B cell (primary cell): ENCODE measurements at regions of chr11 and their contacts with region 1.

Region 1: GRCh38 chr11:13276832-13277767 is 490 bp upstream of the BMAL1 start:
- DNase-seq: peak; percentile 97
- ATAC-seq: peak; percentile 85
- H3K4me3 ChIP-seq: peak overlapping the region; percentile 70 to 94 (median 89)
- H3K4me3 Mint-ChIP-seq: peak overlapping the region; percentile 97
- H3K27ac ChIP-seq: peak overlapping the region; percentile 40 to 46
- H3K27ac Mint-ChIP-seq: peak overlapping the region; percentile 90
- H3K4me1 ChIP-seq: peaks cover 21 to 23% of the 10 kb centered on the region in 2 donors
- H3K4me1 Mint-ChIP-seq: peaks cover 42% of the 10 kb centered on the region
- H3K27me3 ChIP-seq: peaks cover 0 to 20% (median 6%) of the 10 kb centered on the region in 4 experiments
- H3K27me3 Mint-ChIP-seq: peaks cover 17% of the 10 kb centered on the region
- CTCF ChIP-seq: no peak

Region 2: DNA sequence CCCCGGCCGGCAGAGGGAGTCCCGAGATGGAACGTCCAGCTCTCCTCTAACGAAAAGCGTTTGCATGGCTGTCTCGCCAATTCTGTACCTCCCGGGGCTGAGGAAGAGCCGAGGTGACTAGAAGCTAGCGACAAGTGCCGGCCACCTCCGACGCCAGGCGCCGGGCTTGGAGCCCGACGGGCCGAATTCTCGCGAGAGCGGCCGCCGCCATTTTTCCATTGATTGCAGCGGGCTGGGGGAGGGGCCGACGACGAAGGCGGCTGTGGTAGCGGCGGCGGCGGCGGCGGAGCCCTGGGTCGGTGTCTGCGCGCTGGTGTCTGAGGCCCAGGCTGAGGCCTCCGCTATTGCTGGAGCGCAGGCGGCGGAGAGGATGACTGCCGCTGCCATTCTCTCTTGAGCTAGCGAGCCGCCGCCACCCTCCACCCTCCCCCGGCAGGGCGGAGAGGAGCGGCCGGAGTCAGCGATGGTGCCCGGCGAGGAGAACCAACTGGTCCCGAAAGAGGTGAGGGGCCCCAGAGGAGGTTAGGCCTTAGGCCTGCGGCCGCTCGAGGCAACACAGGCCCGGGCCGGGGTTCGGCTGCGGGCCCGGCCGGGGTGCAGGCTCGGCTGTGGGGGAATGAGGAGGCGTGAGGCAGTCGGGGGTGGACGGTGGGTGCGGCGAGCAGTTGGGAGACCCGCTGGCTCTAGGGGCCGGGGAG is 1435.2 kb before region 1 on chr11 and contains the start of gene USP47:
- CTCF ChIA-PET with region 1: no interaction called
- POLR2A ChIA-PET with region 1: no interaction called
- intact Hi-C with region 1: loop called (anchors 5 kb)
- DNase-seq: peak; percentile 96
- ATAC-seq: peak; percentile 81
- H3K4me3 ChIP-seq: peak within 1 kb of the TSS; percentile 85 to 95 (median 92)
- H3K4me3 Mint-ChIP-seq: no peak within 1 kb of the TSS
- H3K27ac ChIP-seq: peak within 1 kb of the TSS; percentile 87 to 98
- H3K27ac Mint-ChIP-seq: no peak within 1 kb of the TSS
- H3K4me1 ChIP-seq: peaks cover 31 to 43% of the 10 kb centered on the region in 2 donors
- H3K4me1 Mint-ChIP-seq: peaks cover 28% of the 10 kb centered on the region
- H3K27me3 ChIP-seq: peaks cover 0 to 6% (median 2%) of the 10 kb centered on the region in 4 experiments
- H3K27me3 Mint-ChIP-seq: peaks cover 9% of the 10 kb centered on the region
- CTCF ChIP-seq: peak; percentile 40
- total RNA-seq, gene USP47: 52.9 and 61.1 TPM in 2 replicates

Region 3: GRCh38 chr11:13462901-13463778 is 186.0 kb after region 1 on chr11 and contains the start of gene BTBD10:
- CTCF ChIA-PET with region 1: interaction called, 4 read pairs
- POLR2A ChIA-PET with region 1: no interaction called
- intact Hi-C with region 1: loop called (anchors 1 kb)
- DNase-seq: peak; percentile 97
- ATAC-seq: peak; percentile 98
- H3K4me3 ChIP-seq: peak within 1 kb of the TSS; percentile 87 to 94 (median 88)
- H3K4me3 Mint-ChIP-seq: peak within 1 kb of the TSS; percentile 99
- H3K27ac ChIP-seq: peak within 1 kb of the TSS; percentile 83 to 93
- H3K27ac Mint-ChIP-seq: peak within 1 kb of the TSS; percentile 97
- H3K4me1 ChIP-seq: peaks cover 17 to 18% of the 10 kb centered on the region in 2 donors
- H3K4me1 Mint-ChIP-seq: peaks cover 46% of the 10 kb centered on the region
- H3K27me3 ChIP-seq: no peaks in the 10 kb centered on the region
- H3K27me3 Mint-ChIP-seq: no peaks in the 10 kb centered on the region
- CTCF ChIP-seq: no peak
- total RNA-seq, gene BTBD10: 19.6 and 22.8 TPM in 2 replicates

Region 4: GRCh38 chr11:13668102-13668956 is 391.2 kb after region 1 on chr11 and contains the start of gene FAR1:
- CTCF ChIA-PET with region 1: no interaction called
- POLR2A ChIA-PET with region 1: no interaction called
- intact Hi-C with region 1: loop called (anchors 1 kb)
- DNase-seq: peak; percentile 98
- ATAC-seq: peak; percentile 87
- H3K4me3 ChIP-seq: peak within 1 kb of the TSS; percentile 69 to 92 (median 80)
- H3K4me3 Mint-ChIP-seq: peak within 1 kb of the TSS; percentile 96
- H3K27ac ChIP-seq: peak within 1 kb of the TSS; percentile 50 to 74
- H3K27ac Mint-ChIP-seq: peak within 1 kb of the TSS; percentile 94
- H3K4me1 ChIP-seq: peaks cover 16 to 24% of the 10 kb centered on the region in 2 donors
- H3K4me1 Mint-ChIP-seq: peaks cover 43% of the 10 kb centered on the region
- H3K27me3 ChIP-seq: peaks cover 0 to 4% (median 1%) of the 10 kb centered on the region in 4 experiments
- H3K27me3 Mint-ChIP-seq: peaks cover 8% of the 10 kb centered on the region
- CTCF ChIP-seq: peak; percentile 78
- total RNA-seq, gene FAR1: 44.7 and 44.8 TPM in 2 replicates

Region 5: DNA sequence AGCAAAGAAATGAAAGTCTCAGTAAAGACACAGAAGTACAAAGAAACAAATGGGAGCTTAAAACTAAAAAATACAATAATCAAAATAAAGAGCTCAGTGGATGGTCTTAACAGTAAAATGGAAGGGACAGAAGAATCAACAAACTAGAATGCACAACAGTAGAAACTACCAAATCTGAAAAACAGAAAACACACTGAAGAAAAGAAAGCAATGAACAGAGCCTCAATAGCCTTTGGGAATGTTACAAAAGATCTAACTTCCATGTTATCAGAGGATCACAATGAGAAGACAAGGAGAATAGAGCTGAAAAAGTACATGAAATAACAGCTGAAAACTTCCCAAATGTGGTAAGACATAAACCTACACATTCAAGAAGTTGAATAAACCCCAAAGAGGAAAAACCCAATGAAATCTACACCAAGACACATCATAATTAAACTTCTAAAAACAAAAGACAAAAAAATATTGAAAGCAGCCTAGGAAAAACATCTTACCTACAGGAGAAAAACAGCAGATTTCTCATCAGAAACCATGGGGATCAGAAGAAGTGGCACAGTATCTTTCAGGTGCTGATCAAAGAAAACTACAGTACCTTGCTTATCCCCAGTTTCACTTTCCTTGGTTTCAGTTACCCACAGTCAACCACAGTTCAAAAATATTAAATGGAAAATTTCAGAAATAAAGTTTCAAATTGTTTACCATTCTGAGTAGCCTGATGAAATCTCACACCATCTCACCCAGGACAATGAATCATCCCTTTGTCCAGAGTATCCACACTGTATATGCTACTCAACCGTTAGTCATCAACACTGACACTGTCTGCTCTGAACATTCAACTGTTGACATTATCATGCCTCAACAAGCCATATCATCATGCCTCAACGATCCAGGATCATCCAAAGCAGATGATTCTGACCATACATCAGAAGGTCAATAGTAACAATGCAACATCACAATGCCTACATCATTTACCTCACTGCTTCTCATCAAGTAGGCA is 1059.7 kb after region 1 on chr11:
- CTCF ChIA-PET with region 1: no interaction called
- POLR2A ChIA-PET with region 1: no interaction called
- intact Hi-C with region 1: loop called (anchors 10 kb)
- DNase-seq: no peak
- ATAC-seq: peak; percentile 57
- H3K4me3 ChIP-seq: no peak overlapping the region
- H3K4me3 Mint-ChIP-seq: peak overlapping the region; percentile 56
- H3K27ac ChIP-seq: peak overlapping the region in 1 of 2 donors; percentile 50
- H3K27ac Mint-ChIP-seq: peak overlapping the region; percentile 72
- H3K4me1 ChIP-seq: peaks cover 57 to 72% of the 10 kb centered on the region in 2 donors
- H3K4me1 Mint-ChIP-seq: peaks cover 74% of the 10 kb centered on the region
- H3K27me3 ChIP-seq: no peaks in the 10 kb centered on the region
- H3K27me3 Mint-ChIP-seq: no peaks in the 10 kb centered on the region
- CTCF ChIP-seq: no peak